Activated CD8-positive, alpha-beta T cell treated with anti-CD3 and anti-CD28 coated beads, Interleukin-2, amount 10 ng/mL, durations not matched to agents 7 days and 5 days (primary cell): ENCODE measurements at regions of chr6 and their contacts with region 1.

Region 1: GRCh38 chr6:32413427-32414047 is 6.6 kb upstream of the BTNL2 start:
- DNase-seq: peak; percentile 87
- ATAC-seq: peak; percentile 82
- H3K4me3 Mint-ChIP-seq: no peak overlapping the region
- H3K27ac Mint-ChIP-seq: no peak overlapping the region
- H3K4me1 Mint-ChIP-seq: peaks cover 8% of the 10 kb centered on the region
- H3K27me3 Mint-ChIP-seq: peaks cover 48% of the 10 kb centered on the region

Region 2: GRCh38 chr6:32244946-32245398 is 168.6 kb before region 1 on chr6:
- CTCF ChIA-PET with region 1: interaction called, 17 read pairs
- POLR2A ChIA-PET with region 1: no interaction called
- DNase-seq: peak; percentile 75
- ATAC-seq: peak; percentile 78
- H3K4me3 Mint-ChIP-seq: peak overlapping the region; percentile 1
- H3K27ac Mint-ChIP-seq: no peak overlapping the region
- H3K4me1 Mint-ChIP-seq: peaks cover 25% of the 10 kb centered on the region
- H3K27me3 Mint-ChIP-seq: no peaks in the 10 kb centered on the region

Region 3: DNA sequence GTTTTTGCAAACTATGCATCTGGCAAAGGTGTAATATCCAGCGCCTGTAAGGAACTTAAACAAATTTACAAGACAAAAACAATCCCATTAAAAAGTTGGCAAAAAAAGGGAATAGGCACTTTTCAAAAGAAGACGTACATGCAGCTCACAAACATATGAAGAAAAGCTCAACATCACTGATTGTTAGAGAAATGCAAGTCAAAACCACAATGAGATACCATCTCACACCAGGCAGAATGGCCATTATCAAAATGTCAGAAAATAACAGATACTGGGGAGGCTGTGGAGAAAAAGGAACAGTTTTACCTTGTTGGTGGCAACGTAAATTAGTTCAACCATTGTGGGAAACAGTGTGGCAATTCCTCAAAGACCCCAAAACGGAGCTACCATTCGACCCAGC is 96.0 kb before region 1 on chr6:
- CTCF ChIA-PET with region 1: no interaction called
- POLR2A ChIA-PET with region 1: no interaction called
- DNase-seq: no peak
- ATAC-seq: no peak
- H3K4me3 Mint-ChIP-seq: no peak overlapping the region
- H3K27ac Mint-ChIP-seq: no peak overlapping the region
- H3K4me1 Mint-ChIP-seq: no peaks in the 10 kb centered on the region
- H3K27me3 Mint-ChIP-seq: peaks cover 38% of the 10 kb centered on the region

Region 4: DNA sequence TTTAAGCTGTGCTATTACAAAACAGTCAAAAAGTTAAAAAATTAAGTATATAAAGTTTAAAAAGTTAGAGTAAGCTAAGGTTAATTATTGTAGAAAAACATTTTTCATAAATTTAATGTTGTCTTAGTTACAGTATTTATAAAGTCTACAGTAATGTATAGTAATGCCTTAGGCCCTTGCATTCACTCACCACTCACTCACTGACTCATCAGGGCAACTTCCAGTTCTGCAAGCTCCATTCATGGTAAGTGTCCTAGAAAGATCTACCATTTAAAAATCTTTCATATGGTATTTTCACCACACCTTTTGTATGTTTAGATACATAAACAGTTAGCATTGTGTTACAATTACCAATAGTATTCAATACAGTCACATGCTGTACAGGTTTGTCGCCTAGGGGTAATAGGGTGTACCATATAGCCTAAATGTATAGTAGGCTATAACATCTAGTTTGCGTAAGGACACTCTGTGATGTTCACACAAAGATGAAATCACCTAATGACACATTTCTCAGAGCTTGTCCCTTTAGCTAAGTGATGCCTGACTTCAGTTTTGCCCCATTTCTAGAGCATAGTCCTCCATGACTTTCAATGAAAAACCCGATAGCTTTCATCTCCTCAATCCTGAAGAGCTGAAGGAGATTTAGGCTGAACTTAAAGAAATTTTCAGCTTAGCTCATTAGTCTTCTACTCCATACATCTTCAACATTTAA is 11.2 kb after region 1 on chr6:
- CTCF ChIA-PET with region 1: interaction called, 31 read pairs
- POLR2A ChIA-PET with region 1: no interaction called
- DNase-seq: no peak
- ATAC-seq: no peak
- H3K4me3 Mint-ChIP-seq: no peak overlapping the region
- H3K27ac Mint-ChIP-seq: no peak overlapping the region
- H3K4me1 Mint-ChIP-seq: no peaks in the 10 kb centered on the region
- H3K27me3 Mint-ChIP-seq: peaks cover 39% of the 10 kb centered on the region

Region 5: GRCh38 chr6:32700391-32701040 is 287.0 kb after region 1 on chr6:
- CTCF ChIA-PET with region 1: interaction called, 92 read pairs
- POLR2A ChIA-PET with region 1: no interaction called
- DNase-seq: peak; percentile 47
- ATAC-seq: peak; percentile 69
- H3K4me3 Mint-ChIP-seq: no peak overlapping the region
- H3K27ac Mint-ChIP-seq: no peak overlapping the region
- H3K4me1 Mint-ChIP-seq: peaks cover 2% of the 10 kb centered on the region
- H3K27me3 Mint-ChIP-seq: peaks cover 60% of the 10 kb centered on the region

Region 6: GRCh38 chr6:32752580-32752979 is 339.0 kb after region 1 on chr6:
- CTCF ChIA-PET with region 1: no interaction called
- POLR2A ChIA-PET with region 1: no interaction called
- DNase-seq: no peak
- ATAC-seq: no peak
- H3K4me3 Mint-ChIP-seq: no peak overlapping the region
- H3K27ac Mint-ChIP-seq: no peak overlapping the region
- H3K4me1 Mint-ChIP-seq: no peaks in the 10 kb centered on the region
- H3K27me3 Mint-ChIP-seq: peaks cover 41% of the 10 kb centered on the region

Region 7: GRCh38 chr6:32796848-32797776 is 383.6 kb after region 1 on chr6:
- CTCF ChIA-PET with region 1: interaction called, 29 read pairs
- POLR2A ChIA-PET with region 1: no interaction called
- DNase-seq: peak; percentile 83
- ATAC-seq: peak; percentile 73
- H3K4me3 Mint-ChIP-seq: peak overlapping the region; percentile 57
- H3K27ac Mint-ChIP-seq: peak overlapping the region; percentile 33
- H3K4me1 Mint-ChIP-seq: peaks cover 37% of the 10 kb centered on the region
- H3K27me3 Mint-ChIP-seq: peaks cover 40% of the 10 kb centered on the region